Activated B cell treated with CpG ODN at 0.5 μM for 24 hours (primary cell): ENCODE measurements at regions of chr7 and their contacts with region 1.

Region 1: GRCh38 chr7:87435546-87435945 is 39.9 kb downstream of the ABCB4 start:
- DNase-seq: no peak
- ATAC-seq: no peak
- H3K4me3 Mint-ChIP-seq: no peak overlapping the region
- H3K27ac Mint-ChIP-seq: no peak overlapping the region
- H3K4me1 Mint-ChIP-seq: no peaks in the 10 kb centered on the region
- H3K27me3 Mint-ChIP-seq: no peaks in the 10 kb centered on the region
- CTCF ChIP-seq: no peak

Region 2: DNA sequence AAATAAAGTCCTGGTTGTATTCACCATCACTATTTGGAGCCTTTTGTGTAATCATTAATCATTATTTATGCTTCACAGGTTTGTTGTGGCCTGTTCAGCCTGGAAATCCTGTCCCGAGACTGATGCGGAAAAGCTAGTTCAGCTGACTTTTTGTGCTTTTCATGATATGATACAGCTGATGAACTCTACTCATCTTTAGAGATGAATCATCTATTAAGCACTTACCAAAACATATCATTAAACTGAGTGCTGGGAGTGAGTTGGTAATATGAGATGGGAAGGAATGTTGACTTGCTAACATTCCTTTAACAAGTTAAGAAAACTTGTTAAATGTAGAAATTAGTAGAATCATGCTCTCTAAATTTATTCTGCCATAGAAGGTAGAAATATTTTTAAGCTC is 37.1 kb before region 1 on chr7:
- CTCF ChIA-PET with region 1: no interaction called
- POLR2A ChIA-PET with region 1: no interaction called
- intact Hi-C with region 1: no loop called
- DNase-seq: no peak
- ATAC-seq: no peak
- H3K4me3 Mint-ChIP-seq: no peak overlapping the region
- H3K27ac Mint-ChIP-seq: no peak overlapping the region
- H3K4me1 Mint-ChIP-seq: no peaks in the 10 kb centered on the region
- H3K27me3 Mint-ChIP-seq: no peaks in the 10 kb centered on the region
- CTCF ChIP-seq: no peak

Region 3: DNA sequence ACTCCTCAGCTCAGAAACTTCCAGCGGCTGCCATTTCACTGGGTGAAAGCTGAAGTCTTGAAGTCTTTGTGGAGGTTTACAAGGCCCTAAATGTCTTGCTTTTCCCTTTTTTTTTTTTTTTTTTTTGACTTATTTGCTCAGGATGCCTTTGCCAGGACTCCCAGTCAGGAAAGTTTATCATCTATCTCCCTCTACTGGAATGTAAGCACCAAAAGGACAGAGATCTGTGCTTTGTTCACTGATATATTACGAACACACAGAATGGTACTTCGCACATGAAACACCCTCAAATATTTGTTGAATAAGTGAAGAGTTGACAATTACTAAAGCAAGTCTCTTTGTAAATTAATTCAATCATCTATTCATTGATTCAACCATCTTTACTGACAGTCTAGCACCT is 16.7 kb after region 1 on chr7:
- CTCF ChIA-PET with region 1: no interaction called
- POLR2A ChIA-PET with region 1: no interaction called
- intact Hi-C with region 1: loop called (anchors 2 kb)
- DNase-seq: no peak
- ATAC-seq: no peak
- H3K4me3 Mint-ChIP-seq: no peak overlapping the region
- H3K27ac Mint-ChIP-seq: no peak overlapping the region
- H3K4me1 Mint-ChIP-seq: peaks cover 3% of the 10 kb centered on the region
- H3K27me3 Mint-ChIP-seq: no peaks in the 10 kb centered on the region
- CTCF ChIP-seq: no peak

Region 4: GRCh38 chr7:88169717-88170320 is 734.3 kb after region 1 on chr7:
- CTCF ChIA-PET with region 1: no interaction called
- POLR2A ChIA-PET with region 1: no interaction called
- intact Hi-C with region 1: no loop called
- DNase-seq: no peak
- ATAC-seq: no peak
- H3K4me3 Mint-ChIP-seq: no peak overlapping the region
- H3K27ac Mint-ChIP-seq: no peak overlapping the region
- H3K4me1 Mint-ChIP-seq: no peaks in the 10 kb centered on the region
- H3K27me3 Mint-ChIP-seq: no peaks in the 10 kb centered on the region
- CTCF ChIP-seq: peak; percentile 17